MCF 10A (cell line): ENCODE measurements at regions of chr17 and their contacts with region 1.

Region 1: DNA sequence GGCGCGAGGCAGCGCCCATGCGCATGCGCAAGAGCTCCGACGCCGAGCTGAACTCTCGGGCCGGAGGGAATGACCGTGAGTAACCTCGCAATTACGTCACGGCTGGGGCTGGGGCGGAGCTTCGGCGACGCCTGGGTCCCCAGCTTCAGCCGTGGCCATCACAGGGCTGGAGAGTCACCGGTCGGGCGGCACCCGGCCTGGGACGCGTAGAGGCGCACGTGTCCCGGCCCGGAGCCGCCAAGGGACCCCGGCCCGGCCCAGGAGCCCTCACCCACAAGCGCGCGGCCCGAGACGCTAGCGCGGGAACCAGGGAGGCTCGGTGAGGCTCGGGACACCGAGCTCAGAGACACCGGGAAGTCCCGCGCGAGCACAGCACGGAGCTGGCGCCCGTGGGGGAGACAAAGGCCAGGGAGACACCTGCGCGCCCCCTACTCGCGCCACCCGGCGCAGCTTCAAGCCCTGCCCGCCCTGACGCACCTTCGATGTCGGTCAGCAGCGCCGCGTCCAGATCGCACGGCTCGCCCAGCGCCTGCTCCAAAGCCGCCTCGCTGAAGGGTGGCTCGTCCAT is 452 bp downstream of the SREBF1 start:
- DNase-seq: peak; percentile 94
- H3K4me3 Mint-ChIP-seq: peak overlapping the region; percentile 73
- H3K27ac Mint-ChIP-seq: peak overlapping the region; percentile 66
- H3K4me1 Mint-ChIP-seq: peaks cover 45% of the 10 kb centered on the region
- H3K27me3 Mint-ChIP-seq: no peaks in the 10 kb centered on the region
- CTCF ChIP-seq: no peak

Region 2: DNA sequence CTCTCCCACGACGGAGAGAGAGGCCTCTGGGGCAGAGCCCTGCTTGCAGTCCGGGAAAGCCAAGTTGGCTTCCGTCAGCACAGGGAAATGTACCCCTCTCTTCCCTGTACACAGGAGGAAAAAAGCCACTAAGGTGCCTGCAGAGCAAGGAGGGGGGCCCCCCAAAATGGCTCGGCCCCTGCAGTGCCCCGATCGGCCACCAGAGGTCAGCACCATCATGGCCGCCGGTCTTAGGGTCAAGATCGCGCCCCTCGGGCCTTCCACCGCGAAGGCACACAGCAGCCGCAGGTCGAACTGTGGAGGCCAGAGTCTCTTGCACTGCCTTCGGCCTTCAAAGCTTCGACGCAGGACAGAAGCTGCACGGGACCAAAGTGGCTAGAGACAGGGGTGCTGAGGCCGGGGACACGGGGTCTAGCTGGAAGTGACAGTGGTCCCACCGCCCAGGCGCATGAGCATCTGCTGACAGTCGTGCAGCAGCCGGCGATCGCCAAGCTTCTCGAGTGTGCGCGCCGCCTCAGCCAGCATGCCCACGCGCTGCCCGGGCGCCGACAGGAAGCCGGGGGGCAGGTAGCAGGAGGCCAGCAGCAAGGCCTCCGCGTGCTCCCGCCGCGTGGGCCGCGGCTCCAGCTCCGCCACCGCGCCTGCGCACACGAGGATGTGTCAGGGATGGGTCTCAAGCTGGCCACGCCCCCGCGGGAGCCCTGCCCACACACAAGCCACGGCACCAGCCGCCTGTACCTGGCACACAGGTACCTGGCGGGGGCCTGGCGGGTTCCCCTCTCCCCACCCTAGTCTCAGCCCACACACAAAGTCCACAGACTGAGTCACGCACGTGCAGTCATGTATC is 23.9 kb before region 1 on chr17:
- CTCF ChIA-PET with region 1: interaction called, 4 read pairs
- POLR2A ChIA-PET with region 1: interaction called, 17 read pairs
- intact Hi-C with region 1: no loop called
- DNase-seq: peak; percentile 62
- H3K4me3 Mint-ChIP-seq: no peak overlapping the region
- H3K27ac Mint-ChIP-seq: no peak overlapping the region
- H3K4me1 Mint-ChIP-seq: peaks cover 5% of the 10 kb centered on the region
- H3K27me3 Mint-ChIP-seq: no peaks in the 10 kb centered on the region
- CTCF ChIP-seq: peak; percentile 98

Region 3: GRCh38 chr17:17823433-17824118 is 12.8 kb before region 1 on chr17:
- CTCF ChIA-PET with region 1: interaction called, 12 read pairs
- POLR2A ChIA-PET with region 1: interaction called, 151 read pairs
- intact Hi-C with region 1: loop called (anchors 2 kb)
- DNase-seq: peak; percentile 91
- H3K4me3 Mint-ChIP-seq: peak overlapping the region; percentile 77
- H3K27ac Mint-ChIP-seq: peak overlapping the region; percentile 76
- H3K4me1 Mint-ChIP-seq: peaks cover 71% of the 10 kb centered on the region
- H3K27me3 Mint-ChIP-seq: no peaks in the 10 kb centered on the region
- CTCF ChIP-seq: no peak

Region 4: DNA sequence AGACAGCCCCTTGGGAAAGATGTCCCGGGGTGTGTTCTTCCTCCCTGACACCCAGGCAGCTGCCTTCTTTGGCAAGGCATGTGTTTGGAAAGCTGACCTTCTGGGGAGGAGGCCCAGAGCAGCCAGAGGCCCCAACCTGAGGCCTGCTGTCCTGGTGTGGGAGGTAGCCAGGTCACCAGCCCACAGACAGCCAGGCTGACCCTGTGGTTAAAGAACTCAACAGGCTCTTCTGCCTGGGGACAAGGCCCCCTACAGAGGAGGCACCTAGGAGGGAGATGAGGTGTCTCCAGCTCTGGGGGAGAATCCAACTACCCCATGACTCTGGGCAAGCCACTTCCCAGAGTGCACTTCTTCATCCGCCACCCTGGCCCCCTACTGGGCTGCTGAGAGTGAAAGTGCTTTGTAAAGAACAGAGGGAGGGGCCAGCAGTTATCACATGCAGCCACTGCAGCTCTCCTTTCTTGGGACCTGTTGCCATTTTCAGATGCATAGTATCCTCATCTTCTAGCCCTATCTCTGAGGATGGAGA is 13.6 kb after region 1 on chr17:
- CTCF ChIA-PET with region 1: interaction called, 7 read pairs
- POLR2A ChIA-PET with region 1: interaction called, 31 read pairs
- intact Hi-C with region 1: no loop called
- DNase-seq: peak; percentile 61
- H3K4me3 Mint-ChIP-seq: no peak overlapping the region
- H3K27ac Mint-ChIP-seq: no peak overlapping the region
- H3K4me1 Mint-ChIP-seq: peaks cover 5% of the 10 kb centered on the region
- H3K27me3 Mint-ChIP-seq: no peaks in the 10 kb centered on the region
- CTCF ChIP-seq: no peak

Region 5: DNA sequence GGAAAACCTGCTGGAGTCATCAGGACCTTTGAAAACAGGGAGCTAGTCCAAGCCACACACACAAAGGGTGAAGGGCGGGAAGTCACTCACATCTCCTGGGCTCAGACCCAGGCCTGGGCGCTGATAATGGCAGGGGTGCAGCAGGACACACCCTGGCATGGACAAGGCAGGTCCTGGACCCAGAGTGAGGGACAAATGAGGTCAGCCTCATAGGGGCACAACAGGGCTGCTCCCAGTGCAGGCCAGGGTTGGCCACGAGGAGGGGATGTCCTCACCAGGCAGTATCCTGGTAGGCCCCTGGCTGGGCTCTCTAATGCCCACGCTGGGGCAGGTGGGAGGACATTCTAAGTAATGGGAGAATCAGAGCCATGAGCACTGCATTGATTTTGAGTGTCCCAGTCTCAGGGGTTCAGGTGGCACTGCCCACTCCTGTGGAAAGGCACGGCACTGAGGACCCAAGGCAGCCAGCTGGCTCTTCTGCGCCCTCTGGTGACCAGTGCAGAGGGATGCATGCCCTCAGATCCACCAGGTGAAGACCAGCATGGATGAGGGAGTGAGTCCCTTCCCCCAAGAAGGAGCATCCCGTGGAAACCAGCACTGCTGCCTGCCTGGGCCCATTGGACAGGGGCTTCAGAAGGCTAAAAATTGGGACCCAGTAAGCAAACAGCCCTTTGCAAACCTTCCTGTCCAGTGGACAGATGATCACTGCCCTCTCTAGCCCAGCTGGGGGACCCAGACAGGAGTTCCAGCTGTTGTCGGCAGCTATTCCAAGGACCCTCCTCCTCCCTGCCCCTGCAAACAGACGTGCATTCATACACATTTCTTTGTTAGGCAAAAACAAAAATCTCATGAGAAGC is 23.8 kb after region 1 on chr17:
- CTCF ChIA-PET with region 1: interaction called, 39 read pairs
- POLR2A ChIA-PET with region 1: interaction called, 31 read pairs
- intact Hi-C with region 1: no loop called
- DNase-seq: peak; percentile 70
- H3K4me3 Mint-ChIP-seq: no peak overlapping the region
- H3K27ac Mint-ChIP-seq: no peak overlapping the region
- H3K4me1 Mint-ChIP-seq: peaks cover 5% of the 10 kb centered on the region
- H3K27me3 Mint-ChIP-seq: no peaks in the 10 kb centered on the region
- CTCF ChIP-seq: peak; percentile 94